BJ (cell line): ENCODE measurements at regions of chr1 and their contacts with region 1.

Region 1: DNA sequence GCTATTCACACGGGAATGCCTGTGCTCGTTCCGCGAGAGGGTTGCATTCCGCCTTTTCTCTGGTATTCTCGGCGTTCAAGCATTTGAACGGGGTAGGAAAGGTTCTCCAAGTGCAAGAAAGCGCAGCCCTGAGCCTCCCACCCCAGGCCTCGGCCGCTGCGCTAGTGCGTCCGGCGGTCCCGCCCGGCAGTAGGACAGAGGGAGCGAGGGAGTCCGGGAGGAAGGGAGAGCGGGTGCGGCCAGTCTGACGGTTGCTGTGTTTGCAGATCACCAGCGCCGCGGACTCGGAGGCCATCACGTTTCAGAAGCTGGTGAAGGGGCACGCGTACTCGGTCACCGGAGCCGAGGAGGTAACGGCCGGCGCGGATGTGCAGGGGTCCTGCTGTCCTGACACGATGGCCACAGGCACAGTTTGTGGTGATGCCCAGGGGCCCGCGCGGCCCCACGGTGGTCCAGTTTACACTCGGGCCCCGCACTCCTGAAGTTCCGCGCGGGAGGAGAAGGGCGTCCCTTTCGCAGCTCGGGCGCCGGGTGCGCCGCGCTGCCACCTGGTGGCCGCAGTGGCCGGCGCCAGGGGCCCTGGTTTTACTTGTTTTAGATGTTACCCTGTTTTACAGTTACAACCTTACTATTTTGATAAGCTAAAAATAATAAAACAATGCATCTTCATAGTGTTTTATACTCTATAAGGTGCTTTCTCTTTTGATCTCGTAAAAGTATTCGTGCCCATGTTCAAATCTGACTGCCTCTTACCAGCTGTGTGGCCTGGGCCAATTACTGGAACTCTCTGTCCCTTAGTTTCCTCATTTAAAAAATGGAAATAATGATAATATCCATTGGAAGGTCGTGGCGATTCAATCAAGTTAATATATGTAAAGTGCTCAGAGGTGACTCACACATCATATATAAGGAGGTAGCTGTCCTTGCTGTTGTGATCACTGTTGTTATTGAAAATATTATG is 36.7 kb downstream of the CAPN2 start:
- DNase-seq: no peak
- H3K4me3 ChIP-seq: peak overlapping the region; percentile 12; the same call in 1 of the 2 replicates
- H3K27me3 ChIP-seq: no peaks in the 10 kb centered on the region
- CTCF ChIP-seq: peak; percentile 78

Region 2: DNA sequence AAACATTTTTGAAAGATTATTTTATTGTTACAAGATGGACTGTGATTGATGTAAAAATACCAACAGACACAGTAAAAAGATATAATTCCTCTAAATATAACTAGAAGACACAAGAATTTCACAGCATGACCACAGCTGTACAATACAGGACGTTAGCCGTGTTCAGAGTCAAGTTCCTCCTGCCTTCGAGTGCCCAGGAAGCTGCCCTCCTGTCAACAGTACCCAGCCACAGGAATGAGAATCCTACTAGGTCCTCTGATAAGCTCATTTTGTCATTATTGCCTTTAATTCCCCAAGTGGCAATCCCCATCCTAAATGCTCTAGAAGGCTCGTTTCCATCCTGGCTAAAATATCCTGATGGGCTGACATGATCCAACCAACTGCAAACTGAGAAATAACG is 53.1 kb before region 1 on chr1:
- CTCF ChIA-PET with region 1: interaction called, 42 read pairs
- POLR2A ChIA-PET with region 1: no interaction called
- DNase-seq: no peak
- H3K4me3 ChIP-seq: no peak overlapping the region
- H3K27me3 ChIP-seq: no peaks in the 10 kb centered on the region
- CTCF ChIP-seq: no peak

Region 3: GRCh38 chr1:223712194-223712849 is 36.7 kb before region 1 on chr1 and contains the start of gene CAPN2:
- CTCF ChIA-PET with region 1: interaction called, 69 read pairs
- POLR2A ChIA-PET with region 1: interaction called, 6 read pairs
- DNase-seq: no peak
- H3K4me3 ChIP-seq: peak within 1 kb of the TSS; percentile 82
- H3K27me3 ChIP-seq: no peaks in the 10 kb centered on the region
- CTCF ChIP-seq: peak; percentile 58
- polyA plus RNA-seq, gene CAPN2: 219 and 222 TPM in 2 replicates

Region 4: GRCh38 chr1:223731133-223731770 is 17.8 kb before region 1 on chr1:
- CTCF ChIA-PET with region 1: interaction called, 30 read pairs
- POLR2A ChIA-PET with region 1: no interaction called
- DNase-seq: no peak
- H3K4me3 ChIP-seq: no peak overlapping the region
- H3K27me3 ChIP-seq: no peaks in the 10 kb centered on the region
- CTCF ChIP-seq: no peak

Region 5: GRCh38 chr1:223759273-223759672 is 10.2 kb after region 1 on chr1:
- CTCF ChIA-PET with region 1: interaction called, 31 read pairs
- POLR2A ChIA-PET with region 1: interaction called, 3 read pairs
- DNase-seq: no peak
- H3K4me3 ChIP-seq: no peak overlapping the region
- H3K27me3 ChIP-seq: no peaks in the 10 kb centered on the region
- CTCF ChIP-seq: no peak